ENCODE measurements at regions of chr15 and their contacts with region 1.

Region 1: GRCh38 chr15:80645494-80646065 is 49.5 kb upstream of the ABHD17C start:
- DNase-seq: no peak
- H3K4me3 ChIP-seq: no peak overlapping the region
- H3K27ac ChIP-seq: no peak overlapping the region
- H3K4me1 ChIP-seq: no peaks in the 10 kb centered on the region
- H3K27me3 ChIP-seq: no peaks in the 10 kb centered on the region
- CTCF ChIP-seq: no peak
- POLR2A ChIP-seq: no peak

Region 2: GRCh38 chr15:80618685-80619400 is 26.7 kb before region 1 on chr15:
- CTCF ChIA-PET with region 1: no interaction called
- POLR2A ChIA-PET with region 1: no interaction called
- dilution Hi-C with region 1: no loop called
- intact Hi-C with region 1: no loop called
- DNase-seq: no peak
- H3K4me3 ChIP-seq: no peak overlapping the region
- H3K27ac ChIP-seq: no peak overlapping the region
- H3K4me1 ChIP-seq: peaks cover 19% of the 10 kb centered on the region
- H3K27me3 ChIP-seq: no peaks in the 10 kb centered on the region
- CTCF ChIP-seq: no peak
- POLR2A ChIP-seq: no peak

Region 3: GRCh38 chr15:80629355-80629754 is 16.2 kb before region 1 on chr15:
- CTCF ChIA-PET with region 1: no interaction called
- POLR2A ChIA-PET with region 1: no interaction called
- dilution Hi-C with region 1: no loop called
- intact Hi-C with region 1: no loop called
- DNase-seq: no peak
- H3K4me3 ChIP-seq: no peak overlapping the region
- H3K27ac ChIP-seq: no peak overlapping the region
- H3K4me1 ChIP-seq: no peaks in the 10 kb centered on the region
- H3K27me3 ChIP-seq: peaks cover 3 to 6% of the 10 kb centered on the region in 2 experiments
- CTCF ChIP-seq: no peak
- POLR2A ChIP-seq: no peak

Region 4: GRCh38 chr15:80660122-80660521 is 14.5 kb after region 1 on chr15:
- CTCF ChIA-PET with region 1: interaction called, 5 read pairs
- POLR2A ChIA-PET with region 1: interaction called, 11 read pairs
- dilution Hi-C with region 1: no loop called
- intact Hi-C with region 1: no loop called
- DNase-seq: peak; percentile 24
- H3K4me3 ChIP-seq: no peak overlapping the region
- H3K27ac ChIP-seq: no peak overlapping the region
- H3K4me1 ChIP-seq: no peaks in the 10 kb centered on the region
- H3K27me3 ChIP-seq: peaks cover 0 to under 1% of the 10 kb centered on the region in 2 experiments
- CTCF ChIP-seq: peak; percentile 17 to 30
- POLR2A ChIP-seq: no peak